Natural killer cell (primary cell): ENCODE measurements at regions of chr10 and their contacts with region 1.

Region 1: DNA sequence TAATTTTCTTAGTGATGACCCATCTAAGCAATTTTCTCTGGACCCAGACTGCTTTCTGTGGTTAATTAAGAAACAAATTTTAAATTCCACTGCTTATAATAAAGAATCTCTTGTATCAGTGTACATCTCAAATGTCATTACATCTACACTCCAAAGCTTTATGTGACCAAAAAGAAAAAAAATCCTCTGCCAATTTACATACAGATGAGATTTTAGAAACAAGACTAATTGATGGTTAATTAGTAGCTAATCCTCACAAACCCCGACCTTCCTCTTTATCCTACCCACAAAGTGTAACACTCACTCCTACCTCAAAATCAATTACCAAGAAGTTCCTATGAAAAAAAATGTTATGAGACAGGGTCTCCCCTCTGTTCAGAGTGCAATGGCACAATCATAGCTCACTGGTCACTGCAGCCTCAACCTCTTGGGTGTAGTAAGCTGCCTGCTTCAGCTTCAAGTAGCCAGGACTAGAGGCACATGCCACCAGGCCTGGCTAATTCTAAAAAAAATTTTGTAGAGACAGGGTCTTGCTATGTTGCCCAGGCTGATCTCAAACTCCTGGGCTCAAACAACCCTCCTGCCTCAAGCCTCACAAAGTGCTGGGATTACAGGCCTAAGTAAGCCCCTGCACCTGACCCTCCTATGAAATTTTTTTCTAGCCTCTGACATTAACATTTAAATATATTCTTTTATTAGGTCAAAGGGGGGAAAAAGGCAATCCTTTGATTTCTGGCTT is 14.8 kb downstream of the KIF5B start:
- DNase-seq: no peak
- ATAC-seq: no peak
- H3K4me3 ChIP-seq: no peak overlapping the region
- H3K4me3 Mint-ChIP-seq: peak overlapping the region; percentile 7
- H3K27ac ChIP-seq: no peak overlapping the region
- H3K27ac Mint-ChIP-seq: peak overlapping the region; percentile 70 to 72
- H3K4me1 ChIP-seq: peaks cover 12% of the 10 kb centered on the region
- H3K4me1 Mint-ChIP-seq: peaks cover 57 to 65% of the 10 kb centered on the region in 2 donors
- H3K27me3 ChIP-seq: no peaks in the 10 kb centered on the region
- H3K27me3 Mint-ChIP-seq: no peaks in the 10 kb centered on the region
- CTCF ChIP-seq: no peak

Region 2: GRCh38 chr10:32055813-32056600 is 14.5 kb after region 1 on chr10 and contains the start of gene KIF5B:
- intact Hi-C with region 1: loop called (anchors 2 kb)
- DNase-seq: peak; percentile 88 to 95
- ATAC-seq: peak; percentile 78 to 88 (median 82)
- H3K4me3 ChIP-seq: peak within 1 kb of the TSS; percentile 98
- H3K4me3 Mint-ChIP-seq: peak within 1 kb of the TSS; percentile 98
- H3K27ac ChIP-seq: peak within 1 kb of the TSS; percentile 89
- H3K27ac Mint-ChIP-seq: peak within 1 kb of the TSS; percentile 93 to 98
- H3K4me1 ChIP-seq: peaks cover 14% of the 10 kb centered on the region
- H3K4me1 Mint-ChIP-seq: peaks cover 56 to 59% of the 10 kb centered on the region in 2 donors
- H3K27me3 ChIP-seq: no peaks in the 10 kb centered on the region
- H3K27me3 Mint-ChIP-seq: no peaks in the 10 kb centered on the region
- CTCF ChIP-seq: no peak
- total RNA-seq, gene KIF5B: 51.0 to 64.2 (median 61.1) TPM

Region 3: DNA sequence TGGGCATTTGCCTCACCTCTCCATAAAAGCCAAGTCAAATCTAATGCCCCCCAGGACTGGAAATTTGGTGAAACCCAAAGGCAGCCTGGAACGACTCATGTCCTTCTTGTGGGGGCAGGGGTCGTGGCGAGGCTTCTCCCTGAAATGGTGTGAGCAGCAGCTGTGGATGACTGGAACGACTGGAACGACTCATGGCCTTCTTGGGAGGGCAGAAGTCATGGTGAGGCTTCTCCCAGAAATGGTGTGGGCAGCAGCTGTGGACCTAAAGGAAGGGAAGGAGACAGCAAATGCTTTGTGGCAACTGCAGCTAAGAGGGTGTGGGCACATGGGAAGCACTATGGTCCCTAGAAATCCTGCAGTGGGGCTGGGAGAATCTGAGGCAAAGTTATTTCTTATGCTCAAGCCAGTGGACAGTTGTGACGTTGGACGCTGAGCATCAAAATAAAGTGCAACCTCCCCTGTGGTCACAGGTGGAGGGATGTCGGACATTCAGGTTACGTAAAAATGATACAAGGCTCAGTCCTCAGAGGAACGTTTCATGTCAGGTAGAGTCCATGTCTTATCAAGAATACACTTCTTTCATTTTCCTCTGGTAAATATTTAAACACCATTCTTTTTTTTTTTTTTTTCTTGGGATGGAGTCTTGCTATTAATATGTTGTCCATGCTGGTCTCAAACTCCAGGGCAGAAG is 121.8 kb after region 1 on chr10:
- intact Hi-C with region 1: no loop called
- DNase-seq: no peak
- ATAC-seq: no peak
- H3K4me3 ChIP-seq: no peak overlapping the region
- H3K4me3 Mint-ChIP-seq: no peak overlapping the region
- H3K27ac ChIP-seq: no peak overlapping the region
- H3K27ac Mint-ChIP-seq: no peak overlapping the region
- H3K4me1 ChIP-seq: no peaks in the 10 kb centered on the region
- H3K4me1 Mint-ChIP-seq: no peaks in the 10 kb centered on the region
- H3K27me3 ChIP-seq: no peaks in the 10 kb centered on the region
- H3K27me3 Mint-ChIP-seq: peaks cover 5 to 7% of the 10 kb centered on the region in 2 donors
- CTCF ChIP-seq: no peak